PC-9 (cell line): ENCODE measurements at regions of chr12 and their contacts with region 1.

Region 1: GRCh38 chr12:12008931-12009611 is 61.7 kb upstream of the BCL2L14 start:
- DNase-seq: peak; percentile 80 to 98
- H3K4me3 ChIP-seq: no peak overlapping the region
- H3K27ac ChIP-seq: peak overlapping the region; percentile 94
- H3K4me1 ChIP-seq: peaks cover 45% of the 10 kb centered on the region
- H3K27me3 ChIP-seq: no peaks in the 10 kb centered on the region
- CTCF ChIP-seq: no peak; the same call in 1 of the 2 replicates

Region 2: DNA sequence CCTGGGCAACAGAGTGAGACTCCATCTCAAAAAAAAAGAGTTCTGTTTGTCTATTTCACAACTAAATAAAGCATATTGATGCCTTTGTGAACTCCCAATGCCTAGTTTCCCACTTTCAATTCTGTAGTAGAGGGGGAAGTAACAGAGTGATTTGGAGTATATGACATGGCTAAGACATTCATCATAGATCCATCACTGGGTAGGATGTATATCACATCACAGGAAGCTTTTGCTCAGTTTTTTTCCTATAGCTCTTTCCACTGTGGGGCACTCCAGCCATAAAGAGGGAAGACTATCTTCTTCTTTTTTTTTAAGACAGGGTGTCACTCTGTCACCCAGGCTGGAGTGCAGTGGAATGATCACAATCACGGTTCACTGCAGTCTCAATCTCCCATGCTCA is 92.3 kb before region 1 on chr12:
- CTCF ChIA-PET with region 1: interaction called, 14 read pairs
- POLR2A ChIA-PET with region 1: no interaction called
- intact Hi-C with region 1: no loop called
- DNase-seq: no peak
- H3K4me3 ChIP-seq: no peak overlapping the region
- H3K27ac ChIP-seq: no peak overlapping the region
- H3K4me1 ChIP-seq: no peaks in the 10 kb centered on the region
- H3K27me3 ChIP-seq: no peaks in the 10 kb centered on the region
- CTCF ChIP-seq: no peak

Region 3: DNA sequence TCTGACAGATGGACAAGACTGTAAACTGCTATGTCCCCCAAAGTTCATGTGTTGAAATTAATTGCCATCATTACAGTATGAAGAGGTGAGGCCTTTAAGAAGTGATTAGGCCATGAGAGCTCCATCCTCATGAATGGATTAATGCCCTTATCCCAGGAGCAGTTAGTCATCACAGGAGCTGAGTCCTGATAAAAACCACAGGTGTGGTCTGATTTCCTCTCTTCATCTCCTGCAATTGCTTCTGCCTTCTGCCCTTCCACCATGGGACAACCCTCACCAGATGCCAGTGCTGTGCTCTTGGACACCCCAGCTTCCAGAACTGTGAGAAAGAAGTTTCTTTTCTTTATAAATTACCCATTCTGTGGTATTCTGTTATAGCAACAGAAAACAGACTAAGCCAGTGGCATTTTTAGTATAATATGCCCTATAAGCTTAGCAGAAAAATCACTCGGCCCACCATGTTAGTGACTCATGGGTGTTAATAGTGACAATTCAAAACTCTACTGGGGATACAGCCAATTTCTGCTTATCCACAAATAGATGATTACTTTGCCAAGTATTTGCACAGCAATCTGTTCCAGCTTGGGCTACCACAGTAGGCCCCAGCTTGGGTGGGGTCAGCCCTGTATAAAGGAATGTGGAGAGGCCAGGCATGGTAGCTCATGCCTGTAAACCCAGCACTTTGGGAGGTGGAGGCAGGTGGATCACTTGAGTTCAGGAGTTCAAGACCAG is 67.3 kb before region 1 on chr12:
- CTCF ChIA-PET with region 1: no interaction called
- POLR2A ChIA-PET with region 1: no interaction called
- intact Hi-C with region 1: no loop called
- DNase-seq: peak; percentile 76 to 86
- H3K4me3 ChIP-seq: no peak overlapping the region
- H3K27ac ChIP-seq: peak overlapping the region; percentile 83
- H3K4me1 ChIP-seq: peaks cover 22% of the 10 kb centered on the region
- H3K27me3 ChIP-seq: no peaks in the 10 kb centered on the region
- CTCF ChIP-seq: no peak

Region 4: GRCh38 chr12:12081836-12082497 is 72.9 kb after region 1 on chr12:
- CTCF ChIA-PET with region 1: no interaction called
- POLR2A ChIA-PET with region 1: no interaction called
- intact Hi-C with region 1: no loop called
- DNase-seq: peak; percentile 24 to 40
- H3K4me3 ChIP-seq: no peak overlapping the region
- H3K27ac ChIP-seq: no peak overlapping the region
- H3K4me1 ChIP-seq: no peaks in the 10 kb centered on the region
- H3K27me3 ChIP-seq: no peaks in the 10 kb centered on the region
- CTCF ChIP-seq: no peak; the same call in 1 of the 2 replicates

Region 5: DNA sequence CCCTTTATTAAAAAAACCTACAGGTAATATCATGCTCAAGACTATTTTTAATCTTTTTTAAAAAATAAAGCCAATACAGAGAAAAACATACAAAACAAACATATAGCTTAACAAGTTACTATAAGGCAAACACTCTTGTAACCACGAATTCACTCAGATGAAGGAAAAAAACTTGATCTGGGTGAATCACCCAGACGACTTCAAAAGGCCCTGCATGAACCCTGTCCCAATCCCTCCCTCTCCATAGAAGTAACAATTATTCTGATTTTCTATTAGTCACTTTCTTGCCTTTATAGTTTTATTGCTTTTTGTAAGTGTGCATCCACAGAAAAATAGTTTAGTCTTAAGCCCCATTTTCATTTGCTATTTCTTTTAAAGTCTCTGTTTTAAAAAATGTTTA is 185.1 kb after region 1 on chr12:
- CTCF ChIA-PET with region 1: no interaction called
- POLR2A ChIA-PET with region 1: no interaction called
- intact Hi-C with region 1: no loop called
- DNase-seq: peak in 1 of 2 experiments; percentile 65
- H3K4me3 ChIP-seq: no peak overlapping the region
- H3K27ac ChIP-seq: no peak overlapping the region
- H3K4me1 ChIP-seq: 0 out of 2 replicates have a peak, but pooled peaks cover 7% of the 10 kb centered on the region
- H3K27me3 ChIP-seq: no peaks in the 10 kb centered on the region
- CTCF ChIP-seq: no peak